ENCODE measurements at regions of chr12 and their contacts with region 1.

Region 1: GRCh38 chr12:19757317-19757877 is 318.1 kb downstream of the AEBP2 start:
- DNase-seq: no peak
- ATAC-seq: peak in 2 of 4 donors; percentile 55 to 63
- H3K4me3 ChIP-seq: no peak overlapping the region
- H3K27ac ChIP-seq: peak overlapping the region in 6 of 12 donors; percentile 7 to 49 (median 40)
- H3K4me1 ChIP-seq: peaks cover 0 to 12% (median 0%) of the 10 kb centered on the region in 12 donors
- H3K27me3 ChIP-seq: no peaks in the 10 kb centered on the region
- CTCF ChIP-seq: peak; percentile 43 to 83 (median 66)
- POLR2A ChIP-seq: no peak

Region 2: DNA sequence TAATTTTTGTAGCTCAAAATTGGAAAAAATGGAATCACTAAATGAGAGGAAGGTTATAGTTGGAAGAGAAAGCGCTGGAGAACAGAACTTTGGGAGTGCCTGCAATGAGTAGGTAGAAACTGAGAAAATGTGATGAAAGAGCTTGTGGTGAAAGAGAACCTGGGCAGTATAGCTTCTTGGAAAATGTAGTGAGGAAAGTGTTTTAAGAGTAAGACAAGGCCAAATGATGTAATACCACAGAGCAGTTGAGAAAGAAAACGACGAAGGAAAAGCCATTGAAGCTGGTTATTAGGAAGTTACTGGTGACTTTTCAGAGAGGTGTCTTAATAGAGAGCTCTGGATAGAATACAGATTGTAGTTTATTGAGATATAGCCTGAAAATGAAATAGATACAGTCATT is 62.8 kb before region 1 on chr12:
- intact Hi-C with region 1: no loop called
- DNase-seq: no peak
- ATAC-seq: no peak
- H3K4me3 ChIP-seq: no peak overlapping the region
- H3K27ac ChIP-seq: no peak overlapping the region
- H3K4me1 ChIP-seq: peaks cover 0 to 7% (median 0%) of the 10 kb centered on the region in 12 donors
- H3K27me3 ChIP-seq: no peaks in the 10 kb centered on the region
- CTCF ChIP-seq: no peak
- POLR2A ChIP-seq: no peak

Region 3: GRCh38 chr12:19994970-19995369 is 237.6 kb after region 1 on chr12:
- intact Hi-C with region 1: loop called in 1 of 10 experiments (anchors 10 kb)
- DNase-seq: no peak
- ATAC-seq: no peak
- H3K4me3 ChIP-seq: no peak overlapping the region
- H3K27ac ChIP-seq: no peak overlapping the region
- H3K4me1 ChIP-seq: peaks cover 0 to 8% (median 0%) of the 10 kb centered on the region in 12 donors
- H3K27me3 ChIP-seq: no peaks in the 10 kb centered on the region
- CTCF ChIP-seq: peak in 9 of 12 donors; percentile 20 to 52 (median 32)
- POLR2A ChIP-seq: no peak

Region 4: DNA sequence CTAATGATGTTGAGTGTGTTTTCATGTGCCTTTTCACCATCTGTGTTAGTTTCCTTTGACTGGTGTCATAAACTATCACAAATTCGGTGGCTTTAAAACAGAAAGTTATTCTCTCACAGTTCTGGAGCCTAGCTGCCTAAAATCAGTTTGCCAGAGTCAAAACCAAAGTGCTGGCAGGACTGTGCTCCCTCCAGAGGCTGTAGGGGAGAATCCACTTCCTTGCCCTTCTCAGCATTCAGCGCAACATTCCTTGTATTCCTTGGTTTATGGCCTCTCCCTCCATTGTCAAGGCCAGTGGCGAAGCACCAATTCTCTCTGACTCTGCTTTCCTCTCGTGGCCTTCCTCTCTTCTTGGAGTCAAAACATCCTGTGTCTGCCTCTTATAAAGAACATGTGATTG is 436.8 kb after region 1 on chr12:
- intact Hi-C with region 1: loop called in 1 of 10 experiments (anchors 10 kb)
- DNase-seq: no peak
- ATAC-seq: peak in 3 of 4 donors; percentile 39 to 68 (median 66)
- H3K4me3 ChIP-seq: no peak overlapping the region
- H3K27ac ChIP-seq: peak overlapping the region in 1 of 12 donors; percentile 4
- H3K4me1 ChIP-seq: peaks cover 0 to 10% (median 0%) of the 10 kb centered on the region in 12 donors
- H3K27me3 ChIP-seq: no peaks in the 10 kb centered on the region
- CTCF ChIP-seq: peak in 10 of 12 donors; percentile 11 to 46 (median 32)
- POLR2A ChIP-seq: no peak

Measured in heart left ventricle (tissue), 16 donors.